MCF 10A (cell line): ENCODE measurements at regions of chr6 and their contacts with region 1.

Region 1: GRCh38 chr6:158377860-158378259 is 65.6 kb downstream of the TULP4 start:
- DNase-seq: peak; percentile 77
- H3K4me3 Mint-ChIP-seq: peak overlapping the region; percentile 46
- H3K27ac Mint-ChIP-seq: peak overlapping the region; percentile 87
- H3K4me1 Mint-ChIP-seq: peaks cover 62% of the 10 kb centered on the region
- H3K27me3 Mint-ChIP-seq: no peaks in the 10 kb centered on the region
- CTCF ChIP-seq: no peak

Region 2: GRCh38 chr6:156526081-156526480 is 1851.8 kb before region 1 on chr6:
- CTCF ChIA-PET with region 1: no interaction called
- POLR2A ChIA-PET with region 1: no interaction called
- intact Hi-C with region 1: no loop called
- DNase-seq: no peak
- H3K4me3 Mint-ChIP-seq: no peak overlapping the region
- H3K27ac Mint-ChIP-seq: no peak overlapping the region
- H3K4me1 Mint-ChIP-seq: no peaks in the 10 kb centered on the region
- H3K27me3 Mint-ChIP-seq: no peaks in the 10 kb centered on the region
- CTCF ChIP-seq: no peak

Region 3: GRCh38 chr6:158231551-158232315 is 146.1 kb before region 1 on chr6:
- CTCF ChIA-PET with region 1: no interaction called
- POLR2A ChIA-PET with region 1: interaction called, 12 read pairs
- intact Hi-C with region 1: no loop called
- DNase-seq: peak; percentile 55
- H3K4me3 Mint-ChIP-seq: peak overlapping the region; percentile 88
- H3K27ac Mint-ChIP-seq: peak overlapping the region; percentile 63
- H3K4me1 Mint-ChIP-seq: peaks cover 25% of the 10 kb centered on the region
- H3K27me3 Mint-ChIP-seq: no peaks in the 10 kb centered on the region
- CTCF ChIP-seq: no peak

Region 4: DNA sequence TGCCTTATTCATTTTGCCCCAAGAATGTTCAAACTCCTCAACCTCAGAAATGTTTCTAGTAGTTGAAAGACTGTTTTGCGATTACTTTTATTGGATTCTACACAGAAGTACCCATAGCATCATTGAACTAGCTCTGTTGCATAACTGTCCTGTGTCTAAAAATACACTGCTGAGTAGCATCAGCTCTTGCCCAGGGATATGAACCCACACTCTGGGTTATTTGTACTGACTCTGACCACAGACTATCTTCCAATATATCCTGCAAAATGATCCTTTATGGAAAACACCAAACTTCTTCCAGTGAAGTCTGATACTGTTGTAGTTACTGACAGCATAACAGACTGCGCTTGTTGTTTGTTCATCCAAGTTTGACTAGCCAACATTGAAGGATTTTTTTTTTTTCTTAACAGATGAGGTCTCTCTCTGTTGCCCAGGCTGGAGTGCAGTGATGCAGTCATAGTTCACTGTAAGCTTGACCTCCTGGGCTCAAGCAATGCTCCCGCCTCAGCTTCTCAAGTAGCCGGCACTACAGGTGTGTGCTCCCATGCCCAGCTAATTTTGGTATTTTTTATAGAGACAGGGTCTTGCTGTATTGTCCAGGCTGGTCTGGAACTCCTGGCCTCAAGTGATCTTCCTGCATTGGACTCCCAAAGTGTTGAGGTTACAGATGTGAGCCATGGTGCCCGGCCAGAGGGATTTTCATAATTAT is 15.7 kb before region 1 on chr6:
- CTCF ChIA-PET with region 1: interaction called, 3 read pairs
- POLR2A ChIA-PET with region 1: interaction called, 10 read pairs
- intact Hi-C with region 1: no loop called
- DNase-seq: no peak
- H3K4me3 Mint-ChIP-seq: no peak overlapping the region
- H3K27ac Mint-ChIP-seq: no peak overlapping the region
- H3K4me1 Mint-ChIP-seq: peaks cover 17% of the 10 kb centered on the region
- H3K27me3 Mint-ChIP-seq: no peaks in the 10 kb centered on the region
- CTCF ChIP-seq: no peak